GM12878 (cell line): ENCODE measurements at regions of chr2 and their contacts with region 1.

Region 1: DNA sequence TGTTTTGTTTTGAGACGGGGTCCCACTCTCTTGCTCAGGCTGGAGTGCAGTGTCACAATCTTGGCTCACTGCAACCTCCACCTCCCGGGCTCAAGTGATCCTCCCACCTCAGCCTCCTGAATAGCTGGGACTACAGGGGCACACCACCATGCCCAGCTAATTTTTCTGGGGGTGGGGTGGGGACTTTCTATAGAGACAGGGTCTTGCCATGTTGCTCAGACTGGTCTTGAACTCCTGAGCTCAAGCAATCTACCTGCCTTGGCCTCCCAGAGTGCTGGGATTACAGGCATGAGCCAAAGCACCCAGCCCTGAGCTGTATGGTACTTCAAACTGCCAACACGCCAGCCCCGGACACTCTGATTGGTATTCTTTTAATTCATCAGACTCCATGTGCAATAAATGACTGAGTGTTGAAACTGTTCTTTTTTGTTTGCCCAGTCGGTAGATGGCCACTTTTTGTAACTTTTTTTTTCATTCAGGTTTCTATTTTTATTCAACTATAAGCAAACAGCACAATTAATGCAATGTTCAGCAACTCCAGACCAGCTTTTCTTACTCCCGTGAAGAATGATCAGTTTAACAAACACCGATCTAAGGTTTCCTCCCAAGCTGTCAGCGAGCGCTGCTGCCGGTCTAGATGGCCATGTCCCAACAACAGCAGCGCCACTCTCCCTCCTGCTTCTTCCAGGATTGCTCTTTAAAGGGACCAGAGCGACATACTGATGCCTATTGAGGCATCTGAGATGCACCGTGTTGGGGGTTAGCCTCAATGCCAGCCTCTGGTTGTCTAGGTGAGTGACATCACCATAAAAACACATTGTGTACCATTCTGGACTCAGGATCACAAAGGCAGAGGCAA is 12.5 kb upstream of the TGOLN2 start:
- DNase-seq: no peak
- ATAC-seq: no peak
- H3K4me3 ChIP-seq: no peak overlapping the region
- H3K27ac ChIP-seq: no peak overlapping the region
- H3K4me1 ChIP-seq: no peaks in the 10 kb centered on the region
- H3K27me3 ChIP-seq: no peaks in the 10 kb centered on the region; a peak in 1 of 4 replicates
- CTCF ChIP-seq: no peak
- EP300 ChIP-seq: no peak
- POLR2A ChIP-seq: no peak
- RAD21 ChIP-seq: no peak

Region 2: GRCh38 chr2:85318222-85319074 is 21.8 kb before region 1 on chr2:
- CTCF ChIA-PET with region 1: no interaction called
- POLR2A ChIA-PET with region 1: no interaction called
- RAD21 ChIA-PET with region 1: no interaction called
- SMC1A ChIA-PET with region 1: interaction called, 4 read pairs
- in situ Hi-C with region 1: no loop called
- intact Hi-C with region 1: loop called (anchors 1 kb)
- DNase-seq: no peak
- ATAC-seq: peak; percentile 72
- H3K4me3 ChIP-seq: no peak overlapping the region
- H3K27ac ChIP-seq: no peak overlapping the region; the same call in 1 of the 2 replicates
- H3K4me1 ChIP-seq: no peaks in the 10 kb centered on the region; the same call in 1 of the 2 replicates
- H3K27me3 ChIP-seq: no peaks in the 10 kb centered on the region
- CTCF ChIP-seq: no peak
- EP300 ChIP-seq: no peak
- POLR2A ChIP-seq: no peak
- RAD21 ChIP-seq: no peak